ENCODE measurements at regions of chr2 and their contacts with region 1.

Region 1: DNA sequence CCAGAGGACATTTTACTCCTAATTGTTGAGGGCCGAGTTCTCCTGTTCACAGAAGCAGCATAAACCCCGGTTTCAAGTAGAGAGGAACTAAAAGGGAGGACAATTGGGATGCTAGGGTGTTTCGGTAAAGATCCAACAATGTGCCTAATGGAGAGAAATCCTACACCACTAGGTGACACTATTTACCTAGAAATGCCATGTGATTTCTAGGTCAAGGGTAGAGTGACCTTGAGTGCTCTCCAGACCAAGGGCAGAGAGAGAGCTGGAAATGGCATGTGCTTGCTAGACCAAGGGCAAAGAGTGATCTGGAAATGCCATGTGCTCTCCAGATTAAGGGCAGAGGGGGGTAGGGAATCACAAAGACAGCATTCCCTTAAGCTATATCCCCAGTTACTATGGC is 472.0 kb downstream of the DCDC2C start:
- DNase-seq: no peak
- ATAC-seq: no peak
- H3K4me3 ChIP-seq: no peak overlapping the region
- H3K27ac ChIP-seq: no peak overlapping the region
- H3K4me1 ChIP-seq: no peaks in the 10 kb centered on the region
- H3K27me3 ChIP-seq: no peaks in the 10 kb centered on the region
- CTCF ChIP-seq: no peak
- EP300 ChIP-seq: no peak
- POLR2A ChIP-seq: no peak
- RAD21 ChIP-seq: no peak

Region 2: DNA sequence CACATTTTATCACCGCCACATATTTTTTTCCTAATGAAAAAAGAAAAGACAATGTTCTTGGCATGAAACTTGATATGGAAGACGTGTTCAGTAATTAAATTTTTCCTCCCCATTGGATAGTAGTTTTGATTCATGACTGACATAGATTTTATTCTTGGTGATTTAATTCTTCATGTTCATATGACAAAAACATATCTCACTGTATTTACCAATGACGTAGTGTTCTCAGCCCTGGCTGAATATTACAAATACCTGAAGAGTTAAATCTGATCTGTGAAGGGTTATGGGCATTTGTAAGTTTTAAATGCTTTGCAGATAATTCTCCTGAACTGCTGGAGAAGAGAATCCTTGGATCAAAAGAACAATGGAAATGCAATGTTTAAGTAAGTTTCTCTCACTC is 11.1 kb before region 1 on chr2:
- CTCF ChIA-PET with region 1: no interaction called
- POLR2A ChIA-PET with region 1: no interaction called
- RAD21 ChIA-PET with region 1: no interaction called
- SMC1A ChIA-PET with region 1: no interaction called
- in situ Hi-C with region 1: no loop called
- intact Hi-C with region 1: loop called (anchors 1 kb)
- DNase-seq: no peak
- ATAC-seq: no peak
- H3K4me3 ChIP-seq: no peak overlapping the region
- H3K27ac ChIP-seq: no peak overlapping the region
- H3K4me1 ChIP-seq: no peaks in the 10 kb centered on the region
- H3K27me3 ChIP-seq: no peaks in the 10 kb centered on the region
- CTCF ChIP-seq: no peak
- EP300 ChIP-seq: no peak
- POLR2A ChIP-seq: no peak
- RAD21 ChIP-seq: no peak